B cell (primary cell): ENCODE measurements at regions of chr19 and their contacts with region 1.

Region 1: DNA sequence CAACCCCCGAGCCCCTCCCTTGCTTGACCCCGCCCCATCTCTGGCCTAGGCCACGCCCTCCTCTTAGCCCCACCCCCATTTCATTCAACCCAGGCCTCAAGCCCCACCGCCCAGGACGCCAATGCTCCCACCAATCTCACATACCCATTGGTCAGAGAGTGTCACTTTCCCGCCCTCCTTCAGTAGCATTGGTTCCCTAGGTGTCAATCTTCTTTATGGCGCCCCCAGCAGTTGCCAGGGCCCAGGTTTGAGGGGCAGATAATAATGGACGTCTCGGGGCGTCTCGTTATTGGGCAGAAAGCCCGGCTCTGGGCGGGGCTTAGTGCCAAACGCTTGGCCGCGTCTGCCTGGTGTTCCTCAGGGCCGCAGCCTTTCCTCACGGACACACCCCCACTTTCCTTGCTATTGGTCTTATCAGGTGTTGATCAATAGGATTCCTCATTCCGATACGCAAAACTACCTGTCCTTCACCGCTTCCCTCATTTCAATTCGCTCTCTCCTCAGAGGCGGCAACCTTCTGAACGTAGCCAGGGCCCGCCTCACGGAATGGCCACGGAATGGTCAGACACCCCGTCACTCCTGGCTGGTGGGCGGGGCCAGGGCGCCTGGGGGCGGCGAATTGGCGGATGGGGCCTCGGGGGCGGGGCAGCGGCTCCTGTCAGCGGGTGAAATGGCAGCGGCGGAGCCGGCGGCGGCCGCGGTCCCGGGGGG is at the start of gene EVI5L:
- DNase-seq: peak; percentile 99
- ATAC-seq: peak; percentile 81
- H3K4me3 ChIP-seq: peak within 1 kb of the TSS in 4 of 5 experiments; percentile 39 to 64 (median 55)
- H3K4me3 Mint-ChIP-seq: peak within 1 kb of the TSS; percentile 82
- H3K27ac ChIP-seq: peak within 1 kb of the TSS in 1 of 2 donors; percentile 62
- H3K27ac Mint-ChIP-seq: peak within 1 kb of the TSS; percentile 84
- H3K4me1 ChIP-seq: peaks cover 8 to 15% of the 10 kb centered on the region in 2 donors
- H3K4me1 Mint-ChIP-seq: peaks cover 24% of the 10 kb centered on the region
- H3K27me3 ChIP-seq: no peaks in the 10 kb centered on the region
- H3K27me3 Mint-ChIP-seq: no peaks in the 10 kb centered on the region
- CTCF ChIP-seq: no peak
- total RNA-seq, gene EVI5L: 11.2 and 11.8 TPM in 2 replicates

Region 2: GRCh38 chr19:7355151-7355820 is 474.4 kb before region 1 on chr19:
- CTCF ChIA-PET with region 1: no interaction called
- POLR2A ChIA-PET with region 1: interaction called, 14 read pairs
- intact Hi-C with region 1: no loop called
- DNase-seq: no peak
- ATAC-seq: no peak
- H3K4me3 ChIP-seq: no peak overlapping the region
- H3K4me3 Mint-ChIP-seq: no peak overlapping the region
- H3K27ac ChIP-seq: peak overlapping the region in 1 of 2 donors; percentile 15
- H3K27ac Mint-ChIP-seq: peak overlapping the region; percentile 89
- H3K4me1 ChIP-seq: peaks cover 64 to 85% of the 10 kb centered on the region in 2 donors
- H3K4me1 Mint-ChIP-seq: peaks cover 75% of the 10 kb centered on the region
- H3K27me3 ChIP-seq: no peaks in the 10 kb centered on the region
- H3K27me3 Mint-ChIP-seq: no peaks in the 10 kb centered on the region
- CTCF ChIP-seq: no peak

Region 3: DNA sequence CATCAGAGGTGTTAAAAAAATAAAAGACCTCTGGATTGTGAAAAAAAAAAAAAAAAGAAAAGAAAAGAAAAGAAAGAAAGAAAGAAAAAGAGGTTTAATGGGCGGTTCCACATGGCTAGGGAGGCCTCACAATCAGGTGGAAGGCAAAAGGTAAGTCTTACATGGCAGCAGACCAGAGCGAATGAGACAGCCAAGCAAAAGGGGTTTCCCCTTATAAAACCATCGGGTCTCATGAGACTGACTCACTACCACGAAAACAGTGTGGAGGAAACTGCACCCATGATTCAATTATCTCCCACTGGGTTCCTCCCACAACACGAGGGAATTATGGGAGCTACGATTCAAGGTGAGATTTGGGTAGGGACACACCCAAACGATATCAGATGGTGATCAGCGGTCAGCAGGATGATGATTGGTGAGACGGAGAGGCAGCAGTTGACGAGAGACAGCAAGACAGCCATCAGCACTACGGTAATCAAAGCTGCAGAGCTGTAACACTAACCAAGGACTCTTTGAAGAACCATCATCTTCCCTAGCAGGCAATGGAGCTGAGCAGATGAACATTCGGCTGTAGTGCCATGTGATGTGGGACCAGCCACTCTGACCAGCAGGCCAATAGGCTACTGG is 78.4 kb before region 1 on chr19:
- CTCF ChIA-PET with region 1: no interaction called
- POLR2A ChIA-PET with region 1: no interaction called
- intact Hi-C with region 1: loop called (anchors 2 kb)
- DNase-seq: peak; percentile 91
- ATAC-seq: peak; percentile 94
- H3K4me3 ChIP-seq: peak overlapping the region in 1 of 5 experiments; percentile 25
- H3K4me3 Mint-ChIP-seq: peak overlapping the region; percentile 58
- H3K27ac ChIP-seq: peak overlapping the region; percentile 80 to 84
- H3K27ac Mint-ChIP-seq: peak overlapping the region; percentile 90
- H3K4me1 ChIP-seq: peaks cover 34 to 43% of the 10 kb centered on the region in 2 donors
- H3K4me1 Mint-ChIP-seq: peaks cover 41% of the 10 kb centered on the region
- H3K27me3 ChIP-seq: peaks cover 0 to 5% (median 0%) of the 10 kb centered on the region in 4 experiments
- H3K27me3 Mint-ChIP-seq: peaks cover 5% of the 10 kb centered on the region
- CTCF ChIP-seq: no peak

Region 4: DNA sequence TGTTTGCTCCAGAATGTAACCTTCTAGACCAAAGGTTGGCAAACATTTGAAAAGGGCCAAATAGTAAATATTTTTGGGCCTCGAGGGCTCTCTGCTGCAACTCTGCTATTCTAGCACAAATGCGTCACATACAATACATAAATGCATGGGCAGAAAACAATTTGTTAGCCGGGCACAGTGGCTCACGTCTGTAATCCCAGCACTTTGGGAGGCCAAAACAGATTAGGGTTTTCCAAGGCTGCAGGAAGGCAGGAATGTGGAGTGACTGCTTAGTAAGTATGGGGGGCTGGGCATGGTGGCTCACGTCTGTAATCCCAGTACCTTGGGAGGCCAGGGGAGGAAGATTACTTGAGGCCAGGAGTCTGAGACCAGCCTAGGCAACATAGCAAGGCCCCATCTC is 21.6 kb before region 1 on chr19:
- CTCF ChIA-PET with region 1: interaction called, 3 read pairs
- POLR2A ChIA-PET with region 1: interaction called, 9 read pairs
- intact Hi-C with region 1: loop called (anchors 1 kb)
- DNase-seq: no peak
- ATAC-seq: no peak
- H3K4me3 ChIP-seq: peak overlapping the region in 1 of 5 experiments; percentile 14
- H3K4me3 Mint-ChIP-seq: no peak overlapping the region
- H3K27ac ChIP-seq: peak overlapping the region in 1 of 2 donors; percentile 17
- H3K27ac Mint-ChIP-seq: no peak overlapping the region
- H3K4me1 ChIP-seq: peaks cover 0 to 17% of the 10 kb centered on the region in 2 donors
- H3K4me1 Mint-ChIP-seq: peaks cover 18% of the 10 kb centered on the region
- H3K27me3 ChIP-seq: peaks cover 0 to 6% (median 3%) of the 10 kb centered on the region in 4 experiments
- H3K27me3 Mint-ChIP-seq: peaks cover 3% of the 10 kb centered on the region
- CTCF ChIP-seq: no peak

Region 5: GRCh38 chr19:7815325-7815724 is 14.4 kb before region 1 on chr19:
- CTCF ChIA-PET with region 1: interaction called, 6 read pairs
- POLR2A ChIA-PET with region 1: interaction called, 3 read pairs
- intact Hi-C with region 1: loop called (anchors 2 kb)
- DNase-seq: peak; percentile 71
- ATAC-seq: peak; percentile 86
- H3K4me3 ChIP-seq: peak overlapping the region in 4 of 5 experiments; percentile 1 to 55 (median 34)
- H3K4me3 Mint-ChIP-seq: peak overlapping the region; percentile 67
- H3K27ac ChIP-seq: peak overlapping the region; percentile 17 to 60
- H3K27ac Mint-ChIP-seq: peak overlapping the region; percentile 81
- H3K4me1 ChIP-seq: peaks cover 11 to 17% of the 10 kb centered on the region in 2 donors
- H3K4me1 Mint-ChIP-seq: peaks cover 26% of the 10 kb centered on the region
- H3K27me3 ChIP-seq: peaks cover 0 to 14% (median 2%) of the 10 kb centered on the region in 4 experiments
- H3K27me3 Mint-ChIP-seq: peaks cover 11% of the 10 kb centered on the region
- CTCF ChIP-seq: no peak

Region 6: GRCh38 chr19:7868676-7869452 is 39.1 kb after region 1 on chr19:
- CTCF ChIA-PET with region 1: interaction called, 4 read pairs
- POLR2A ChIA-PET with region 1: no interaction called
- intact Hi-C with region 1: loop called (anchors 1 kb)
- DNase-seq: peak; percentile 94
- ATAC-seq: peak; percentile 71
- H3K4me3 ChIP-seq: peak overlapping the region in 4 of 5 experiments; percentile 48 to 63 (median 56)
- H3K4me3 Mint-ChIP-seq: peak overlapping the region; percentile 86
- H3K27ac ChIP-seq: peak overlapping the region; percentile 29 to 48
- H3K27ac Mint-ChIP-seq: peak overlapping the region; percentile 65
- H3K4me1 ChIP-seq: peaks cover 40 to 47% of the 10 kb centered on the region in 2 donors
- H3K4me1 Mint-ChIP-seq: peaks cover 37% of the 10 kb centered on the region
- H3K27me3 ChIP-seq: peaks cover 0 to 82% (median 25%) of the 10 kb centered on the region in 4 experiments
- H3K27me3 Mint-ChIP-seq: peaks cover 32% of the 10 kb centered on the region
- CTCF ChIP-seq: peak; percentile 95

Region 7: DNA sequence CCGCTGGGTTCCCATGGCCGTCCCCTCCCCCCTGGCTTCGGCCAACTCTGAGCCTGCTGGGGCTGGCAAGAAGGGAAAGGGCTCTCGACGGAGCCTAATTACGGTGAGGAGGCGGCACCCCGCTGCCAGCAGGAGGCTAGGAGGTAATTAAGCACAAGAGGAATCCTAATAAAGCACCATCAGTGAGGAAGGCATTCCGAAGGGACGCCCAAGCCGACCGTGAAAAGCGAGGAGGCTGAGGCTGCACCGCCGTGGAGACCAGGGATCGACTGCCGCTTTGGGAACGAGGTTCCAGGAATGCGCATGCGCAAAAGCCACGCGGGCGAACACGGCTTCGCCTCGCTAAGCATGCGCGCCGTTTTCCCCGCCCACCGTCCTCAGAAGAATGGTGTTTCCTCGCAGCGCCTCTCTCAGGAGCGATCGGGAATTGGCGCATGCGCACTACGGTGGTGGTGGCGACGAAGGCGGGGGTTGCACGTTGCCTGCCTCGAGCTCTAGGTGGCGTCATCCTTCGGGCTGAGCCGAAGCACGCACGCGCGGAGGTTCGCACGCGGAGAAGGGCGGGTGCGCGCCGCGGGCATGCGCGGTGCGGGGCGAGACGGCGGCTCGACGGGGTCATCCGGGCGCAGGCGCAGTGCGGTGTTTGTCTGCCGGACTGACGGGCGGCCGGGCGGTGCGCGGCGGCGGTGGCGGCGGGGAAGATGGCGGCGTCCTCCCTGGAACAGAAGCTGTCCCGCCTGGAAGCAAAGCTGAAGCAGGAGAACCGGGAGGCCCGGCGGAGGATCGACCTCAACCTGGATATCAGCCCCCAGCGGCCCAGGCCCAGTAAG is 73.7 kb after region 1 on chr19 and contains the start of gene MAP2K7:
- CTCF ChIA-PET with region 1: no interaction called
- POLR2A ChIA-PET with region 1: no interaction called
- intact Hi-C with region 1: loop called (anchors 1 kb)
- DNase-seq: peak; percentile 100
- ATAC-seq: peak; percentile 89
- H3K4me3 ChIP-seq: peak within 1 kb of the TSS; percentile 53 to 79 (median 73)
- H3K4me3 Mint-ChIP-seq: peak within 1 kb of the TSS; percentile 95
- H3K27ac ChIP-seq: peak within 1 kb of the TSS; percentile 67 to 82
- H3K27ac Mint-ChIP-seq: peak within 1 kb of the TSS; percentile 99
- H3K4me1 ChIP-seq: peaks cover 20 to 21% of the 10 kb centered on the region in 2 donors
- H3K4me1 Mint-ChIP-seq: peaks cover 29% of the 10 kb centered on the region
- H3K27me3 ChIP-seq: no peaks in the 10 kb centered on the region
- H3K27me3 Mint-ChIP-seq: no peaks in the 10 kb centered on the region
- CTCF ChIP-seq: peak; percentile 66
- total RNA-seq, gene MAP2K7: 71.9 and 76.3 TPM in 2 replicates